ENCODE measurements at regions of chr3 and their contacts with region 1.

Region 1: DNA sequence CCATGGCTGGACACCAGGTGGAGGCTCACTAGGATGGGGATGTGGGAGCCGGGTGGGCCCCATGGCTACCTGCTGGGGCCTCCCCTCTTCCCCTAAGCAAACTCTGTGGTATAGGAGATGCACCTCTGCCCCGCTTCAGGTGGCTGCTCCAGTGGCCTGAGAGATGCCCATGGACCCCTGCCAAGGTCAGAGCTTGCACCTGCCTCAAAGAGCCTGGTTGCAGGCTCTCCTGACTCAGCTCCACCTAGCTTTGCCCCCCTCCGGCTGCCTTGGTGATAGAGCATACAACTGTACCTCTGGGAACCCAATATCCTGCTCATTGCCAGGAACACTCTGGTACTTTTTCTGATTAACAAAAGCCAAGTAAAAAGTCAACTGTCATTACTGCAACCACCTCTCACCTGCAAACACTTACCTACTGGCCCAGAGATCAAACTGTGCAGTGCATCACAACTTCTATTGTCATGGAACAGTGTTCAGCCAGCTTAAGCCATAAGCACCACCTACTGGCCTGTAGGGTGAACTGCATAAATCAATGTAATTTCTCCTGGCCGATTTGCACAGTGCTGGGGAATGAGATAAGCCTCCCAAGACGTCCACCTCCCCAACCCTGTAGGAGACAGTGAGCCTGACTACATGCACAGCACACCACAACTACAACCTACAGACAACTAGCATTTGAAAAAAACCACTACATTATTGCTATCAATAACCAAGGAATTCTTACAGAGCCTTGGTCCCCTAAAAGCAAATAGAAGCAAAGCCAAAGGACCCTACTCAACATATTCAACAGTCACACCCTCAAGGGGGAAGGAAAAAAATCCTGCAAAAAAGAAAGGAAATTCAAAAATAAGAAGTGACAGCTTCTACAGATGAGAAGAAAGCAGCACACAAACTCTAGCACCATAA is 352.4 kb upstream of the ARHGEF26 start:
- DNase-seq: peak in 33 of 35 experiments; percentile 6 to 76 (median 30)
- ATAC-seq: peak; percentile 87 to 95 (median 90)
- H3K4me3 ChIP-seq: no peak overlapping the region
- H3K4me3 Mint-ChIP-seq: no peak overlapping the region
- H3K27ac ChIP-seq: no peak overlapping the region
- H3K27ac Mint-ChIP-seq: no peak overlapping the region
- H3K4me1 ChIP-seq: peaks cover 0 to 3% of the 10 kb centered on the region in 2 experiments
- H3K4me1 Mint-ChIP-seq: peaks cover 0 to 7% (median 2%) of the 10 kb centered on the region in 3 donors
- H3K27me3 ChIP-seq: no peaks in the 10 kb centered on the region
- H3K27me3 Mint-ChIP-seq: peaks cover 4 to 6% of the 10 kb centered on the region in 2 donors

Region 2: GRCh38 chr3:153043729-153044328 is 725.0 kb before region 1 on chr3:
- CTCF ChIA-PET with region 1: interaction called, 10 to 27 read pairs
- POLR2A ChIA-PET with region 1: interaction called, 4 read pairs
- DNase-seq: no peak
- ATAC-seq: no peak
- H3K4me3 ChIP-seq: no peak overlapping the region
- H3K4me3 Mint-ChIP-seq: no peak overlapping the region
- H3K27ac ChIP-seq: no peak overlapping the region
- H3K27ac Mint-ChIP-seq: no peak overlapping the region
- H3K4me1 ChIP-seq: no peaks in the 10 kb centered on the region
- H3K4me1 Mint-ChIP-seq: peaks cover 0 to 5% (median 3%) of the 10 kb centered on the region in 3 donors
- H3K27me3 ChIP-seq: no peaks in the 10 kb centered on the region
- H3K27me3 Mint-ChIP-seq: peaks cover 0 to 3% of the 10 kb centered on the region in 2 donors

Region 3: DNA sequence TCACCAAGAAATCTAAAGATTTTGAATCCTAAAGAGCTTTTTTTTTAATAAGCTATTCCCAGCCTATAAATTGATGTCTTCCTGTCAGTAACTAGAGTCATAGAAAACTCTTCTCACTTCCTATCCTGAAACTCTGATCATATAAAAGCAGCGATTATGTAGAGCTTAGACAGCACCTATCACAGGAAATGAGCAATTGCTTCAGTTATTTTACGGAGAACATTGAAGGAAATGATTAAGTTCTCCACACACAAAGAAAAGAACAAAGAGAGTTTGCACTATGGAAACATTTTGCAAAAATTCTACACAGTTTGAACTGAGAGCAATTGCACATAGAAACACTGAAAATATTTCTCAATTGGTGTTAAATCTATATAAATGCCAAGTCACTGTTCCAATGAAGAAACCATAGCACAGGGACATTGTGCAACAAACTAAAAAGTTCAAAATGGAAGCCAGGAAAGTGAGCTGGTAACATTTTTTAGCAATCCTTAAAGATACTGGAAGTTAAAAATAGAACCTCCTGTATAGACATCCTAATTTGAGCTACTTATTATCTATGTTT is 60.9 kb after region 1 on chr3:
- CTCF ChIA-PET with region 1: no interaction called
- POLR2A ChIA-PET with region 1: interaction called in 1 of 2 experiments, 19 read pairs
- DNase-seq: no peak
- ATAC-seq: no peak
- H3K4me3 ChIP-seq: no peak overlapping the region
- H3K4me3 Mint-ChIP-seq: no peak overlapping the region
- H3K27ac ChIP-seq: no peak overlapping the region
- H3K27ac Mint-ChIP-seq: no peak overlapping the region
- H3K4me1 ChIP-seq: no peaks in the 10 kb centered on the region
- H3K4me1 Mint-ChIP-seq: peaks cover 0 to 1% (median 0%) of the 10 kb centered on the region in 3 donors
- H3K27me3 ChIP-seq: no peaks in the 10 kb centered on the region
- H3K27me3 Mint-ChIP-seq: peaks cover 2 to 4% of the 10 kb centered on the region in 2 donors

Region 4: GRCh38 chr3:154464440-154465190 is 695.8 kb after region 1 on chr3:
- CTCF ChIA-PET with region 1: no interaction called
- POLR2A ChIA-PET with region 1: no interaction called
- DNase-seq: no peak
- ATAC-seq: no peak
- H3K4me3 ChIP-seq: no peak overlapping the region
- H3K4me3 Mint-ChIP-seq: no peak overlapping the region
- H3K27ac ChIP-seq: no peak overlapping the region
- H3K27ac Mint-ChIP-seq: no peak overlapping the region
- H3K4me1 ChIP-seq: no peaks in the 10 kb centered on the region
- H3K4me1 Mint-ChIP-seq: no peaks in the 10 kb centered on the region
- H3K27me3 ChIP-seq: no peaks in the 10 kb centered on the region
- H3K27me3 Mint-ChIP-seq: peaks cover 4 to 7% of the 10 kb centered on the region in 2 donors

Measured in T-cell (primary cell).